ENCODE measurements at regions of chr2 and their contacts with region 1.

Region 1: GRCh38 chr2:56749152-56749752 is 565.5 kb downstream of the CCDC85A start:
- DNase-seq: no peak
- ATAC-seq: peak; percentile 68
- H3K4me3 ChIP-seq: no peak overlapping the region
- H3K27ac ChIP-seq: no peak overlapping the region
- H3K4me1 ChIP-seq: no peaks in the 10 kb centered on the region
- H3K27me3 ChIP-seq: no peaks in the 10 kb centered on the region
- CTCF ChIP-seq: peak; percentile 52

Region 2: GRCh38 chr2:56666777-56667176 is 82.5 kb before region 1 on chr2:
- intact Hi-C with region 1: no loop called
- DNase-seq: no peak
- ATAC-seq: no peak
- H3K4me3 ChIP-seq: no peak overlapping the region
- H3K27ac ChIP-seq: no peak overlapping the region
- H3K4me1 ChIP-seq: no peaks in the 10 kb centered on the region
- H3K27me3 ChIP-seq: no peaks in the 10 kb centered on the region
- CTCF ChIP-seq: no peak

Region 3: DNA sequence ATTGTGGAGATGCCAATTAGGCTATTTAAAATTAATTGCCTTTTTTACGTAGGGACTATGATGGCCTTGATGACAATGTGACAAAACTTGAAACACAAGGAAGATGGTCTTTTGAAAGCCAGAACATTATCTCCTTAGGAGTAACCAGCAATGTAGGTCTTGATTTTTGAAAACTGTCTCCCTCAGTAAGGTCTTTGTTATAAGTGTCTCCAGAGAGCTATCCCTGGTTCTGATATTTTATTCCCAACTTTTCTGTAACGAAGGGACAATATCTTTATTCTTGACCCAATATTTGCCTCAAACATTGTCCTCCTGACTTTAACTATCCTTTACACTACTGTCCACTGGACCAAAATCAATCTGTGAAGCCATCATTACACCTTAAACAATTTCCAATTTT is 72.3 kb before region 1 on chr2:
- intact Hi-C with region 1: loop called (anchors 5 kb)
- DNase-seq: no peak
- ATAC-seq: no peak
- H3K4me3 ChIP-seq: no peak overlapping the region
- H3K27ac ChIP-seq: no peak overlapping the region
- H3K4me1 ChIP-seq: no peaks in the 10 kb centered on the region
- H3K27me3 ChIP-seq: no peaks in the 10 kb centered on the region
- CTCF ChIP-seq: no peak

Region 4: GRCh38 chr2:56705713-56706112 is 43.5 kb before region 1 on chr2:
- intact Hi-C with region 1: no loop called
- DNase-seq: no peak
- ATAC-seq: no peak
- H3K4me3 ChIP-seq: no peak overlapping the region
- H3K27ac ChIP-seq: no peak overlapping the region
- H3K4me1 ChIP-seq: no peaks in the 10 kb centered on the region
- H3K27me3 ChIP-seq: no peaks in the 10 kb centered on the region
- CTCF ChIP-seq: no peak